HAP-1 (cell line): ENCODE measurements at regions of chr9 and their contacts with region 1.

Region 1: DNA sequence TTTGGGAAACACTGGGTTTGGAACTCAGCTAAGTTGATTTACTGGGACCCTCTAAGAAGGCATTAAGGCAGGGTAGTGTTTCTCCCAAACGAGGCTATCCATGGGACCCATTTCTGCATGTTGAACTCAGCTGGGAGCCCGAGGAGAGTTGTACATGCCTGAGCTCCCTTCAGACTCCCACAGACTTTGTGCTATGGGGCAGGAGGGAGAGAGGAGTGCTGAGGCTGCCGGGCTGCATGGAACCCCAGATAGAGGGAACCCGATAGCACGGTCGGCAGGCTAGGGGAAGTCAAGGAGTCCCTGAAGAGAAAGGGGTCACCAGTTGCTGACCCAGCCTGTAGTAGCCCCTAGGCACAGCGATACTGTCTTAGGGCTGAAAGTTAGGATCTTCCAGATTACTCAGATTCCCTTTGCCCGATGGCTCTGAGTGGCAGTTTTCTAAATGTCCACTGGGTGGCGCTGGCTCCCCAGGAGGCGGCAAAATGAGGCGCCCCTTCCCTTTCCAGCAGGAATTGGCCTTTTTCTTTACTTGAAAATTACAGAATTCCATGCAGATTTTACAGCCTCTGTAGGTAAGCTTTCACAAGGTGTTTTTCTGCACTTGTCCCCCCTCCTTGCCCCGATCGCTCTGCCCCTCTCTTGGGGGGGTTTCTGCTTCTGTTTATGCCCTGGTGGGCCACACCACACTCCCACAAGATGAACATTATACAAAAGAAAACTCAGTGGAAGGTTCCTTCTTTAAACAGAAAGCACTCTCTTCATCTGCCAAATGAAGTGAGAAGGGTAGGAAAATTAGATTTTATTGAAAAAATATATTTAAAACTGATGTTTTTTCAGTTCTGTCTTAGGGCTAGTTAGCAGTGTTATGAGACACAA is 17.8 kb downstream of the NANS start:
- DNase-seq: peak; percentile 57 to 81
- H3K4me3 ChIP-seq: no peak overlapping the region
- H3K4me1 ChIP-seq: peaks cover 16% of the 10 kb centered on the region
- H3K27me3 ChIP-seq: no peaks in the 10 kb centered on the region

Region 2: GRCh38 chr9:97160255-97160654 is 914.1 kb before region 1 on chr9:
- in situ Hi-C with region 1: no loop called
- DNase-seq: no peak
- H3K4me3 ChIP-seq: no peak overlapping the region
- H3K4me1 ChIP-seq: no peaks in the 10 kb centered on the region; the same call in 1 of the 2 replicates
- H3K27me3 ChIP-seq: no peaks in the 10 kb centered on the region

Region 3: DNA sequence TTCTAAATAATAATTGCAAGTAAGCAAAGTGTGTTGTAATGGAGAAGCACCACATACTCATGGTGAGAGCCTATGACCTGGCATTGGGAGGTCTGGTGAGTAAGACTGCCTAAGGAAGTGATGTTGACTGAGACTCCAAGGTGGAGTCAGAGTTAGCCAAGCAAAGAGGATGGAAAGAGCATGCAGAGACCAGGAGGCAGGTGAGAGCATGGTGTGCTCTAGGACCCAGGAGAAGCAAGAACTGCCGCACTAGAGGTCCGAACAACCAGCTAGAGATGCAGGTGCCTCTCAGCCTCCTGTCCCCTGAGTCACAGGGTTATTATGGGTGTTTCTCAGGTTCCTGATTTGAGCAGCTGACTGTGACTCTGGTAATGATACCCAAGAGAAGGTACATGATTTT is 63.9 kb before region 1 on chr9:
- in situ Hi-C with region 1: no loop called
- DNase-seq: no peak
- H3K4me3 ChIP-seq: no peak overlapping the region
- H3K4me1 ChIP-seq: no peaks in the 10 kb centered on the region
- H3K27me3 ChIP-seq: no peaks in the 10 kb centered on the region

Region 4: DNA sequence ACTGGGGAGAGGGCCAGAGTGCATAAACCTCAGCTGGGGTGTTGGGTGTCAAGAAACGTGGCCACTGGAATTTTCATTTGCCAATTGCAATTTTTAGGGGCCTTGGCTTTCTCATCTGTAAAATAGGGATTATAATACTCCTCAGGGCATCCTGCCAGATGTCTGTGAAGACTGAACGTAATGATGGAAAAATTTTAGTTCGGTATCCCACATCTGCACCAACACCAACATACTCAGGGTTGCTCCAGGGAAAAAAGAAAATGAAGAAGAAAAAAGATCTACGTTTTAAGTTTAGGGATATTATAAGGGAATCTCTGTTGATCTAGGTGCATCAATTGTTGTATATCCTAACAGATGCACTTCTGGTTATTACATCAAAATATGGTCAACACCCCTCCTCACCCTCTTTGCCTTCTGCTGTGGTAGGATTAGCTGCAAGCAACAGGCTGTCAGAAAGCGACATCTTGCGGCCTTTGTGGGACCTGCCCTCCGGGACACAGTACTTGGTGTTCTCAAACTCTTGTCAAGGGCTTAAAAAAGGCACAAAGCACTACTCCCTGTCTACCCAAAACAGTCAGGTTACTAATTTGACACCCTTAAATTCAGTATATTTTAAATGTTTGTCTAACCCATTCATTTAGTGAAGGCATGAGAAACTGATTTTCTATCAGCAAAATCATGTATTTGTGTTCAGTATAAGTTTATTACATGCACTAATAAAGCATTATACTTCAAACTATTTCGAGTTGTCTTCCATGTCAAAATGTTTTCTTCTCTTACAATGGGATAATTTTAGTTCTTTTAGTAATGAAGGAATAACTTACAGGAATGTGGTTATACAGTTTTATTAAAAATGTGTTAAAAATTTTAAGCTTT is 189.4 kb after region 1 on chr9:
- in situ Hi-C with region 1: loop called (anchors 5 kb)
- DNase-seq: peak; percentile 73 to 86
- H3K4me3 ChIP-seq: no peak overlapping the region
- H3K4me1 ChIP-seq: no peaks in the 10 kb centered on the region
- H3K27me3 ChIP-seq: no peaks in the 10 kb centered on the region; the same call in 1 of the 2 replicates